ENCODE measurements at regions of chr16 and their contacts with region 1.

Region 1: GRCh38 chr16:25210758-25211157 is 6.0 kb upstream of the AQP8 start:
- DNase-seq: no peak
- H3K4me3 ChIP-seq: no peak overlapping the region
- CTCF ChIP-seq: no peak
- POLR2A ChIP-seq: no peak

Region 2: GRCh38 chr16:24539291-24539849 is 671.4 kb before region 1 on chr16 and contains the start of gene RBBP6:
- intact Hi-C with region 1: no loop called
- DNase-seq: peak; percentile 92 to 98
- H3K4me3 ChIP-seq: peak within 1 kb of the TSS; percentile 92
- CTCF ChIP-seq: peak in 1 of 3 donors; percentile 8
- POLR2A ChIP-seq: peak; percentile 57 to 98
- total RNA-seq, gene RBBP6: 101 to 174 (median 108) TPM

Region 3: GRCh38 chr16:25079637-25080378 is 130.9 kb before region 1 on chr16:
- intact Hi-C with region 1: loop called (anchors 10 kb)
- DNase-seq: no peak
- H3K4me3 ChIP-seq: no peak overlapping the region
- CTCF ChIP-seq: no peak
- POLR2A ChIP-seq: no peak